ENCODE measurements at regions of chr11 and their contacts with region 1.

Region 1: DNA sequence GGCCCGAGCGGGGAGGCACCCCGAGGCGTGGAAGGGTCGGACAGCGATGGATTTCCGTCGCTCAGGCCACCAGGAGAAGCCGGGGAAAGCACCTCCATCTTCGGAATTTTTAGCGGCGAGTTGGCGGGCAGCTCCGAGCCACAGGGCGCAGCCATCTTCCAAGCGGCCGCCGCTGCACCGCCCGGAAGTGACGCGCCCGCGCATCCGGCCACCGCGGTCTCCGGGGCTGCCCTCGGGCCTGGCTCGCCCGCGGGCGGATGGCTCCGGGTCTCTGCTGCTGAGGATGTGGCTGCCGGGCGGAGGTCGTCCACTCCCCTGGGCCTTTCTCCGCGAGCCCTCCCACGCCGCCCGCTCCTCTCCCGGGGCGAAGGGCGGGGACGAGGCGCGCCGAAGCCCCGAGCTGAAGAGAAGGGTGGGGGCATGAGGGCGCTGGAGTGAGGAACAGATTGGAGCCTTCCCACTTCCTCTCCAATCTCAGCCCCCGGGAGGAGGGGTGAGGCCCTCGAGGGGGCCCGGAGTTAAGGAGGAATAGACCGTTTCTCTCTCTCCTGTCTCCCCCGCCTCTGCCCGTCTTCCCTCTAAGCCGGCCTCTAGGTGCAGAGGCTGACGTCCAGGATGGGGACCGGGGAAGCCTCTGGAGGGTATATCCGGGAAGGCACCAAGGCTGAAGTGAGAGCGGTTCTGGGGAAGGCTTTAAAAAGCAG is at the start of gene MSANTD2:
- DNase-seq: peak; percentile 76
- H3K4me3 Mint-ChIP-seq: peak within 1 kb of the TSS; percentile 92
- H3K27ac Mint-ChIP-seq: peak within 1 kb of the TSS; percentile 80
- H3K4me1 Mint-ChIP-seq: peaks cover 27% of the 10 kb centered on the region
- H3K27me3 Mint-ChIP-seq: peaks cover 11% of the 10 kb centered on the region
- total RNA-seq, gene MSANTD2: 10.5 and 10.8 TPM in 2 replicates

Region 2: DNA sequence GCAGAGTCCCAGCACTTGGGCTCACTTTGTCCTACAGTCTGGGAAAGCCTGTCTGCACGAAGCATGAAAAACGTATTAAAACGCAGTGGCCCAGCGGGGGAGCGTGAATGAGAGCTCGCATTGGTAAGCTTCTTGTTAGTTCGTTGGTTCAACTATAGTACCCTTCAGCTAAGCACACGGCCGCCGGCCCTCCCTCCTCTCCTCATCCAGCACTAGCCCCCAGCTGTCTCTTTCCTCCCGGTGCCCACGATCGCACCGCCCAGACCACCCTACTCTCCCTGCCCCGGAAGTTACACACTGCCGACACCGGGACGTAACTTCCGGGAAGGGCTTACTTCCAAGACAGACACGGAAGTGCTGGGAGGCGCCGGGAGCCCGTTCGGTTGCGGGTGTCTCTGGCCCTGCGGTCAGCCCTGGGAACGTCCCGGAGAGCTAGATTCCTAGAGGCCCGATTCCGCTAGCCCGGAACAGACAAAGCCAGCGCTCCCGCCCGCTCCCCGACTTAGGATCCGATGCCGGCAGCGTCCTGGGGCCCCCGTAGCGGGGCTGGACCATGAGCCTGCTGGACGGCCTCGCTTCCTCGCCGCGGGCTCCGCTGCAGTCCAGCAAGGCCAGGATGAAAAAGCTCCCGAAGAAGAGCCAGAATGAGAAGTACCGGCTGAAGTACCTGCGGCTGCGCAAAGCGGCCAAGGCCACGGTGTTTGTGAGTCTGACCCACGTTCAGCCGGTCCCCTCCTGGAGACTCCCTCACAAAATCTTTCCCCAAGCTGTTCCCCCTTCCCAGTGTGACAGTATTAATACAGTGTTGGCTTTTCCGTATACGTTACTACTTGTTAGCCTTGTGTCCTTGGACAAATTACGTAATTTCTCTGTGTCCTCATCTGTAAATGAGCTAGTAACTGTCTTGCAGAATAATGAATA is 177.6 kb before region 1 on chr11 and contains the start of gene TBRG1:
- intact Hi-C with region 1: loop called (anchors 5 kb)
- DNase-seq: peak; percentile 78
- H3K4me3 Mint-ChIP-seq: peak within 1 kb of the TSS; percentile 96
- H3K27ac Mint-ChIP-seq: peak within 1 kb of the TSS; percentile 92
- H3K4me1 Mint-ChIP-seq: peaks cover 25% of the 10 kb centered on the region
- H3K27me3 Mint-ChIP-seq: peaks cover 24% of the 10 kb centered on the region
- total RNA-seq, gene TBRG1: 36.1 and 37.4 TPM in 2 replicates